GM12878 (cell line): ENCODE measurements at regions of chr22 and their contacts with region 1.

Region 1: DNA sequence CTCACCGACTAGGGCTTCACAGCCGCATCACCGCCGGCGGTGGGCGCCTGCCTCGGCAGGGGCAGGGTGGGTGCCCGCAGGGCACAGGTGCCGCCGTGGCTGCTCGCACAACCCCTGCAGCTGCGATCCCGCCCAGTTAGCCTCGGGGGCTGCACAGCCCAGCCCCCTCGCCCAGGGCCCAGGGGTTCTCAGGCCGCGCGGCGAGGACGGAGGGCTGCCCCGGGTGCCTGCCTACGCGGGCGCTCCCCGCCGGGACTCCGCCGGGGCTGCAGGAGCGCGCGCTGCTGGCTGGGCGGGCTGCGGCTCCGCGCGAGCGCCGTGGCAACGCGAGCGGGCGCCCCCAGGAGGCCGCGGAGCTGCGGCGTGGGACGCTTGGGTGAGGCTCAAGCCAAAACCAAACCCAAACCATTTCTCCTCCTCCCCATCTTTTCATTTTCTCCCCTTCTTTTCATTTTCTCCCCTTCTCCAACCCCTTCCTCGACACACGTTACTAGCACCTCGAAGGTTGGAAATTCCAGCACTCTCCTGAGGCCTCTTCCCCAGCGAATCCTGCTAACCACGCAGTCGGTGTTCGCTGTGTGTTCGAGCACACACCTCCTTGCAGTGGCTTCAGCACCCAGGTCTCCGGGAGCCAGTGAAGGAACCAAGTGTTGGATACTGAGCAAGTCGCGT is at the start of gene MICAL3:
- DNase-seq: no peak
- ATAC-seq: peak; percentile 96
- H3K4me3 ChIP-seq: peak within 1 kb of the TSS; percentile 79
- H3K27ac ChIP-seq: no peak within 1 kb of the TSS
- H3K4me1 ChIP-seq: peaks cover 7% of the 10 kb centered on the region
- H3K27me3 ChIP-seq: no peaks in the 10 kb centered on the region; a peak in 2 of 4 replicates
- CTCF ChIP-seq: peak; percentile 58 to 83 (median 76); a peak in 4 of 6 replicates
- EP300 ChIP-seq: no peak
- POLR2A ChIP-seq: no peak
- RAD21 ChIP-seq: peak; percentile 75
- polyA plus RNA-seq, gene MICAL3: 2.6 to 3.3 TPM

Region 2: GRCh38 chr22:17891481-17892167 is 132.8 kb before region 1 on chr22:
- CTCF ChIA-PET with region 1: interaction called, 17 read pairs
- POLR2A ChIA-PET with region 1: no interaction called
- RAD21 ChIA-PET with region 1: interaction called, 4 read pairs
- SMC1A ChIA-PET with region 1: interaction called, 6 read pairs
- in situ Hi-C with region 1: no loop called
- intact Hi-C with region 1: no loop called
- DNase-seq: no peak
- ATAC-seq: peak; percentile 62; the same call in 2 of the 3 replicates
- H3K4me3 ChIP-seq: no peak overlapping the region
- H3K27ac ChIP-seq: no peak overlapping the region
- H3K4me1 ChIP-seq: no peaks in the 10 kb centered on the region
- H3K27me3 ChIP-seq: no peaks in the 10 kb centered on the region
- CTCF ChIP-seq: peak; percentile 27 to 42 (median 36); a peak in 4 of 6 replicates
- EP300 ChIP-seq: no peak
- POLR2A ChIP-seq: no peak
- RAD21 ChIP-seq: peak; percentile 30

Region 3: DNA sequence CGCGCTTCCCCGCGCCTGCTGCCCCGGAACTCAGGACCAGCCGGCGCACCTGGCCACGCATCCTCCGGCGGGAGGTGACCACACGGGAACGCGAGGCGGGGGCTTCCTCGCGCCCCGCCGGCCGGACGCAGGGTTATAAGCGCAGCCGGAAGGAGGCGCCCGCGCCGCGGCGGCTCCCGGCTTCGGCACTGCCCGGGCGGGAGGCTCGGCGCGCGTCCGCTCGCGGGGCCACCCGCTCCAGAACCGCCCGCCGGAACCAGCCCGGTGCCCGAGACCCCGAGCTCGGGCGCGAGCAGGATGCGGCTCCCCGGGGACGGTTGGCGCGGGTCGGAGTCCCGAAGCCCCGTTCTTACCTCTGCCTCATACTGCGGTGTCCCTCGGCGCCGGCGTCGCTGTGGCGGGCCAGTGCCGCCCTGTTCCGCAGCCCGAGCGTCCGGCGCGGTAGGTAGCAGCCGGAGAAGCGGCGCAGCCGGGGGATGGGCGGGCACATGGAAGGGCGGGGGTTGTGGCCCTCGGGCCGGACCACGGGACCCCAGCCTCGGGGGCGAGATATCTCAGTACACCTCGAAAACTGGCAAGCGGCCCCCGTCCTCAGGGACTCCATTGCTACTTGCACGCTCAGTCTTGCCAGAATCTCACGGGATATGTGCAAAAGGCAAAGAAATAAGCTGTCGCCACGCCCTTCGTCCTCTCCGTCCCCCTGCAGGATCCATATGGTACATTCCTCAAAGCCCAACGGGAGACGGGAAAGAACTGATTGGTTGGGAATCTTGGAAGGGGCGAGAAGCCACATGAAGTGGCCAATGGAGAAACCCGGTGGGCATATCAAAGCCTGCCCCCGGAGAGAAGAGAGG is 23.1 kb before region 1 on chr22:
- CTCF ChIA-PET with region 1: interaction called, 17 read pairs
- POLR2A ChIA-PET with region 1: no interaction called
- RAD21 ChIA-PET with region 1: interaction called, 11 read pairs
- SMC1A ChIA-PET with region 1: interaction called, 8 read pairs
- in situ Hi-C with region 1: no loop called
- intact Hi-C with region 1: no loop called
- DNase-seq: peak; percentile 75
- ATAC-seq: peak; percentile 86
- H3K4me3 ChIP-seq: peak overlapping the region; percentile 78
- H3K27ac ChIP-seq: peak overlapping the region; percentile 87
- H3K4me1 ChIP-seq: peaks cover 32% of the 10 kb centered on the region
- H3K27me3 ChIP-seq: no peaks in the 10 kb centered on the region
- CTCF ChIP-seq: peak; percentile 40 to 58 (median 47); a peak in 5 of 6 replicates
- EP300 ChIP-seq: no peak
- POLR2A ChIP-seq: peak; percentile 94
- RAD21 ChIP-seq: peak; percentile 52

Region 4: DNA sequence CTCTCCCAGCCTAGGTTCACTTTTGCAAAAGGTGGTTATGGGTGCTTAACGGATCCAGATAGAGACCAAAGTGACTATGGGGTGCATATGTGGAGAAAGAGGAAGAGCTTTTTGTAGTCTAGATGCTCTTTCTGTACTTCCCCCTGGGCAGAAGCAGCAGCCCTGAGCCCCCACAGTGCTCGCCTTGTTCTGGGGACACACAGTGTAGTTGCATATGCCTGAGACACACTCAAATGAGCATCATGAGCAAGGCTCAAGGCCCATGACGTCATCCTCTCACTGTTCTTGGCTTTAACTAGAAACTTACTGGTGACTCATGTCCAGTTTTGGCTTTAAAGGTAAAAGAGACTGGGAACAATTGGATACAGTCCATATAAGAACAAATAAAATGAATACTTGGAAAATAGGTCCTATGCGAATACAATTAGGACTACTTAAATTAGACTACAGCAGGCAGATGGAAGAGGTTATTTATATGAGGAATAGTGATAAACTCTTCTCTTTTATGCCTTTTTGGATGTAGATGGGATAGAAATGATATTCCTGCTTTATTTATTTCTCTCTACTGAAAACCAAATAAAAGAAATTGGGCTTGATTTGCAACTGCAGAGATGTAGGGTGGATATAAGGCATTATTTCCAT is 33.3 kb after region 1 on chr22:
- CTCF ChIA-PET with region 1: interaction called, 18 read pairs
- POLR2A ChIA-PET with region 1: interaction called, 5 read pairs
- RAD21 ChIA-PET with region 1: interaction called, 11 read pairs
- SMC1A ChIA-PET with region 1: interaction called, 13 read pairs
- in situ Hi-C with region 1: no loop called
- intact Hi-C with region 1: no loop called
- DNase-seq: peak; percentile 68
- ATAC-seq: peak; percentile 84
- H3K4me3 ChIP-seq: peak overlapping the region; percentile 48; the same call in 1 of the 2 replicates
- H3K27ac ChIP-seq: peak overlapping the region; percentile 49; the same call in 1 of the 2 replicates
- H3K4me1 ChIP-seq: peaks cover 30% of the 10 kb centered on the region
- H3K27me3 ChIP-seq: no peaks in the 10 kb centered on the region
- CTCF ChIP-seq: no peak
- EP300 ChIP-seq: peak; percentile 29 to 49; a peak in 2 of 4 replicates
- POLR2A ChIP-seq: no peak
- RAD21 ChIP-seq: no peak

Region 5: DNA sequence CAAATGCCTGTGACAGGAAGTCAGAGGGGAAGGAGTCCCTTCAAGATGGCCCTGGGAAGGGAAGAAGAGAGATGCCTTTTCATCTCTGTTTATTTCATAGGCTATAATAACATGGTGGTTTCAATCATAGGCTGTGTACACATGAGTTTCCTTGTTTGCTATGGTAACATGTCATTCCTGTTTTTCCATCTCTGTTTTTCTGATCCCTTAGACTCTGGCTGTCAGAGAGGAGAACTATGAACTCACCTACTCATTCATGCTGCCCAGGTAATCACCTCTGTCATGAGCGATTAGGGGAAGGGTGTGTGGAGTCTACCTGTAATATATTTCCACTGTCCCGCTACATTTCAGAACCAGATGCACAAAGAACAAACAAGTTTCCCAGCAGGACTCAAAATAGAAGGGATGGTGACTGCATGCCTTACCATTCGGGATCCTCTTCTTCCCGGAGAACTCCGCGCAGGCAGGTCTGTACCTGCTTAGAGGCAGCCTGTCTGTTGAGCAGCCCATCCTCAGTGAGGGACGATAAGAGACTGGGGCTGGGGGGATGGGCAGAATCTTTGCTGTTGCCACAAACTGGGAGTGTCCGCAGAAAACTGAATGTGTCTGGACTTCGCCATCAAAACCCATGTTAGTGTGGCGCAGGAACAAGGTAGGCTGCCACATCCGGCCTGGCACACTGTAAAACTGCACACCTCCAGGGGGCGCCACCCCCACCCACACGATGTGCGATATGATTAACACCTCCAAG is 46.3 kb after region 1 on chr22:
- CTCF ChIA-PET with region 1: interaction called, 80 read pairs
- POLR2A ChIA-PET with region 1: no interaction called
- RAD21 ChIA-PET with region 1: interaction called, 19 read pairs
- SMC1A ChIA-PET with region 1: interaction called, 98 read pairs
- in situ Hi-C with region 1: no loop called
- intact Hi-C with region 1: loop called (anchors 5 kb)
- DNase-seq: no peak
- ATAC-seq: no peak
- H3K4me3 ChIP-seq: no peak overlapping the region
- H3K27ac ChIP-seq: no peak overlapping the region
- H3K4me1 ChIP-seq: peaks cover 26% of the 10 kb centered on the region
- H3K27me3 ChIP-seq: no peaks in the 10 kb centered on the region
- CTCF ChIP-seq: peak in 2 of 3 experiments; percentile 43 to 49; a peak in 4 of 6 replicates
- EP300 ChIP-seq: no peak
- POLR2A ChIP-seq: no peak
- RAD21 ChIP-seq: no peak